H1 (cell line): ENCODE measurements at regions of chr22 and their contacts with region 1.

Region 1: DNA sequence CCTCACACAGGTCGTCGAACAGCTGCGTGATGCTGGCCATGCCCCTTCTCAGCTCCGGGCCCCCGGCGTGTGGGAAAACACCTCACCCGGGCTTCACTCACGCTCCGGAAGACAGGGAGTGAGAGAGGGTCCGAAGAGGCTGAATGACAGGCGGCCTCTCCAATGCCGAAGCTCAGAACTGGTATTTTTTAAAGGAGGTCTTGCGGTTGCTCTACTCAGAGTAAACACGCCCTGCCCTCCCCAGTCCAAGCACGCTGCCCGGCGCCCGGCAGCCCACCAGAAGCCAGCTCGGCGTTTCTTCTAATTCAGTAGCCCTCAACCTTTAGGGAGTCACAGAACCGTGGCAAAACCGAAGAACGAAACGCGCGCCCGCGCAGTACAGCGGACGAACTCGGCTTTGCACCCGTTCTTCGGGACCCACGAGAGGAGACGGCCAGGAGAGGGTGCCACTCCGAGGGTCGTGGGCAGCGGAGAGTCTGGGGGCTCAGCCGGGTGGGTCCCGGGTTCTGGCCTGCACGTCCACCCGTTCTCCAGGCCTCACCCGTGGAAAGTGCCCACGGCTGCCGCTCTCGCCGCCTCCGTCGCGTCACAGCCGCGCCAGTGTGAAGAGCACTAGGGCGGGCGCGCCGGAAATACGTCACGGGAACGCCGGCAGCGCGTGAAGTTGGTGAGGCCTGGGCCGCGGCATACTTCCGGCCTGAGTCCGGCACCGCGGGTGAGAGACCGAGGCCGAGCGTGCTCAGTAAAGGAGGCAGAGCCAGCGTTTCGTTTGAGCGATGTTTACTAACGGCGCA is at the start of gene TUBGCP6:
- DNase-seq: peak; percentile 39 to 94
- H3K4me3 ChIP-seq: peak within 1 kb of the TSS; percentile 87 to 96 (median 90)
- H3K27ac ChIP-seq: peak within 1 kb of the TSS; percentile 70
- H3K4me1 ChIP-seq: peaks cover 0 to 20% (median 14%) of the 10 kb centered on the region in 4 experiments; a peak in 6 of 7 replicates
- H3K27me3 ChIP-seq: no peaks in the 10 kb centered on the region
- CTCF ChIP-seq: peak in 2 of 3 experiments; percentile 8 to 16; a peak in 3 of 4 replicates
- EP300 ChIP-seq: no peak
- POLR2A ChIP-seq: peak in 1 of 2 experiments; percentile 90; a peak in 2 of 3 replicates
- RAD21 ChIP-seq: no peak
- total RNA-seq, gene TUBGCP6: 23.5 and 24.7 TPM in 2 replicates

Region 2: GRCh38 chr22:50221410-50222300 is 23.0 kb before region 1 on chr22:
- CTCF ChIA-PET with region 1: interaction called, 77 read pairs
- POLR2A ChIA-PET with region 1: interaction called, 5 read pairs
- DNase-seq: peak in 1 of 2 experiments; percentile 45
- H3K4me3 ChIP-seq: no peak overlapping the region
- H3K27ac ChIP-seq: no peak overlapping the region
- H3K4me1 ChIP-seq: peaks cover 0 to 11% (median 2%) of the 10 kb centered on the region in 4 experiments; a peak in 3 of 7 replicates
- H3K27me3 ChIP-seq: no peaks in the 10 kb centered on the region
- CTCF ChIP-seq: peak; percentile 42 to 50 (median 42)
- EP300 ChIP-seq: no peak
- POLR2A ChIP-seq: no peak
- RAD21 ChIP-seq: peak; percentile 36 to 52

Region 3: GRCh38 chr22:50474668-50475492 is 230.3 kb after region 1 on chr22 and contains the start of gene SBF1:
- CTCF ChIA-PET with region 1: no interaction called
- POLR2A ChIA-PET with region 1: no interaction called
- DNase-seq: peak in 1 of 2 experiments; percentile 95
- H3K4me3 ChIP-seq: peak within 1 kb of the TSS; percentile 53 to 84 (median 60)
- H3K27ac ChIP-seq: no peak within 1 kb of the TSS; the same call in 1 of the 2 replicates
- H3K4me1 ChIP-seq: peaks cover 0 to 25% (median 16%) of the 10 kb centered on the region in 4 experiments; a peak in 6 of 7 replicates
- H3K27me3 ChIP-seq: peaks cover 1 to 8% (median 3%) of the 10 kb centered on the region in 4 experiments; a peak in 6 of 7 replicates
- CTCF ChIP-seq: 0 out of 4 replicates have a peak, but pooled peaks of 1 of the 3 experiments have one; percentile 6
- EP300 ChIP-seq: no peak
- POLR2A ChIP-seq: no peak; a peak in 1 of 3 replicates
- RAD21 ChIP-seq: no peak
- total RNA-seq, gene SBF1: 68.4 and 71.5 TPM in 2 replicates